Dorsolateral prefrontal cortex (tissue), 120 donors: ENCODE measurements at regions of chr15 and their contacts with region 1.

Region 1: GRCh38 chr15:51162865-51163762 is 68.4 kb upstream of the TNFAIP8L3 start:
- DNase-seq: peak; percentile 37 to 87 (median 80)
- H3K4me3 ChIP-seq: peak overlapping the region in 54 of 59 donors; percentile 2 to 58 (median 36)
- H3K27ac ChIP-seq: peak overlapping the region in 58 of 59 donors; percentile 18 to 99 (median 92)
- H3K27me3 ChIP-seq: no peaks in the 10 kb centered on the region
- CTCF ChIP-seq: peak; percentile 90 to 99 (median 98)

Region 2: GRCh38 chr15:51132384-51133139 is 30.6 kb before region 1 on chr15:
- intact Hi-C with region 1: loop called in 1 of 2 experiments (anchors 2 kb)
- DNase-seq: peak in 5 of 10 donors; percentile 39 to 65 (median 51)
- H3K4me3 ChIP-seq: no peak overlapping the region
- H3K27ac ChIP-seq: peak overlapping the region in 36 of 59 donors; percentile 1 to 67 (median 45)
- H3K27me3 ChIP-seq: no peaks in the 10 kb centered on the region
- CTCF ChIP-seq: peak; percentile 56 to 94 (median 85)

Region 3: GRCh38 chr15:51192521-51193280 is 29.6 kb after region 1 on chr15:
- intact Hi-C with region 1: loop called (anchors 1 kb)
- DNase-seq: peak; percentile 69 to 96 (median 94)
- H3K4me3 ChIP-seq: peak overlapping the region in 1 of 59 donors; percentile 10
- H3K27ac ChIP-seq: peak overlapping the region in 2 of 59 donors; percentile 16 to 40
- H3K27me3 ChIP-seq: no peaks in the 10 kb centered on the region
- CTCF ChIP-seq: peak; percentile 93 to 99 (median 98)

Region 4: GRCh38 chr15:51380999-51381795 is 218.1 kb after region 1 on chr15:
- intact Hi-C with region 1: loop called in 1 of 2 experiments (anchors 5 kb)
- DNase-seq: peak; percentile 33 to 78 (median 61)
- H3K4me3 ChIP-seq: peak overlapping the region in 6 of 59 donors; percentile 13 to 34 (median 20)
- H3K27ac ChIP-seq: peak overlapping the region in 51 of 59 donors; percentile 4 to 97 (median 84)
- H3K27me3 ChIP-seq: no peaks in the 10 kb centered on the region
- CTCF ChIP-seq: peak; percentile 51 to 99 (median 93)